Naive thymus-derived CD8-positive, alpha-beta T cell (primary cell): ENCODE measurements at regions of chr13 and their contacts with region 1.

Region 1: GRCh38 chr13:106536244-106537034 is 977 bp upstream of the EFNB2 start:
- DNase-seq: peak; percentile 67 to 95 (median 84)
- ATAC-seq: peak; percentile 44 to 58
- H3K4me3 Mint-ChIP-seq: peak overlapping the region; percentile 88 to 98 (median 94)
- H3K27ac Mint-ChIP-seq: peak overlapping the region in 9 of 10 donors; percentile 12 to 92 (median 67)
- H3K4me1 Mint-ChIP-seq: peaks cover 7 to 25% (median 16%) of the 10 kb centered on the region in 4 donors
- H3K27me3 Mint-ChIP-seq: peaks cover 18 to 27% (median 21%) of the 10 kb centered on the region in 5 donors

Region 2: DNA sequence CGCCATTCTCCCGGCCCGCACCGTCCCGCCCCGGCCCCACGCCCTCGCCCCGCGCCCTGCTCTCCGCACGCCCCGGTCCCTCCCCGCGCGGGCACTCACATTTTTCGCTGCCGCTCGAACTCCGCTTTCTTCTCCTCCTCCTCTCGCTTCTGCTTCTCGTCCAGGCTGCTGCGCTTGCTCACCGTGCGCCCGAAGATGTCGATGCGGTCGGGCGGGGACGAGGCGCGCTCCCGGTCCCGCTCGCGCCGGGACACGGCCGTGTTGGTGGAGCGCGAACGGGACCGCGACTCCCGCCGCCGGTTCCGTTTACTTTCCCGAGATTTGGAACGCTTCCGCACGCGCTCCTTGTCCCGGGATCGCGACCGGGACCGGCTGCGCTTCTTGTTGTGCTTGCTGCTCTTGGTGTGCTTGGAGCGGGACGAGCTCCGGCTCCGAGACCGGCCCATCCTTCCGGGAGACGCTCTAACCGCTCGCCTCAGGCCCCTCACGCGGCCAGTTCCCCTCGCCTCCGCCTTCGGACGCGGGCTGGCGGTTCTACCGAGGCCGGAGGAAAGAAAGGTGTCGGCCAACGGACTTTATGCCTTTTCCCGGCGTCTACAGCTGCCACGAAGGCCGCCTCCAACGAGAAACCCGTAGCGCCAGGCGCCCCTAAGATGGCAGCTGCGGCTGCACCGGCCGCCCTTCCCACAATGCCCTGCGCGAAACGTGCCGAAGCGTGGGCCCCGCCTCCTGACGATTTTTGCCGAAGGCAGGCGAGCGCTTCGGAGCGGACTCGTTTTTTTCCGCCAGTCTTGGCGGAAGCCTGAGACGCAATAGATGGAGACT is 31.2 kb after region 1 on chr13 and contains the start of gene ARGLU1:
- POLR2A ChIA-PET with region 1: interaction called, 53 read pairs
- DNase-seq: peak; percentile 90 to 98 (median 96)
- ATAC-seq: peak; percentile 84 to 91
- H3K4me3 Mint-ChIP-seq: peak within 1 kb of the TSS; percentile 87 to 100 (median 97)
- H3K27ac Mint-ChIP-seq: peak within 1 kb of the TSS; percentile 90 to 98 (median 96)
- H3K4me1 Mint-ChIP-seq: peaks cover 35 to 68% (median 61%) of the 10 kb centered on the region in 4 donors
- H3K27me3 Mint-ChIP-seq: no peaks in the 10 kb centered on the region
- polyA plus RNA-seq, gene ARGLU1: 37.0 to 46.3 (median 40.3) TPM

Region 3: DNA sequence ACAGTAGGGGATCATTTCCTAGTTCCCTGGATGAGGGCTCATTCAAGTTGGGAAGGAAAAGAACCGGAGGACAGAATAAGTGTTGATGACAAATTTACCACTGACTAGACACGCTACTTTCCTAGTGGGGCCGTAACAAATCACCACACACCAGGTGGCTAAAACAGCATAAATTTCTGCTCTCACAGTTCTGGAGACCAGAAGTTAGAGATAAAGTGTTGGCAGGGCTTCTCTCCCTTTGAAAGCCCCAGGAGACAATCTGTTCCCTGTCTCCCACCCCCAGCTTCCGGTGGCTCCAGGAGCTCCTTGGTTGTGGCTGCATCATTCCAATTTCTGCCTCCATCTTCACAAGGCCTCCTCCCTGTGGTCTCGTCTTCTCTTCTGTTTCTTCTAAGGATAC is 96.9 kb after region 1 on chr13:
- POLR2A ChIA-PET with region 1: no interaction called
- DNase-seq: no peak
- ATAC-seq: no peak
- H3K4me3 Mint-ChIP-seq: no peak overlapping the region
- H3K27ac Mint-ChIP-seq: no peak overlapping the region
- H3K4me1 Mint-ChIP-seq: peaks cover 0 to 2% (median 0%) of the 10 kb centered on the region in 4 donors
- H3K27me3 Mint-ChIP-seq: peaks cover 5 to 29% (median 9%) of the 10 kb centered on the region in 5 donors